Transverse colon (tissue), 4 donors: ENCODE measurements at regions of chr18 and their contacts with region 1.

Region 1: DNA sequence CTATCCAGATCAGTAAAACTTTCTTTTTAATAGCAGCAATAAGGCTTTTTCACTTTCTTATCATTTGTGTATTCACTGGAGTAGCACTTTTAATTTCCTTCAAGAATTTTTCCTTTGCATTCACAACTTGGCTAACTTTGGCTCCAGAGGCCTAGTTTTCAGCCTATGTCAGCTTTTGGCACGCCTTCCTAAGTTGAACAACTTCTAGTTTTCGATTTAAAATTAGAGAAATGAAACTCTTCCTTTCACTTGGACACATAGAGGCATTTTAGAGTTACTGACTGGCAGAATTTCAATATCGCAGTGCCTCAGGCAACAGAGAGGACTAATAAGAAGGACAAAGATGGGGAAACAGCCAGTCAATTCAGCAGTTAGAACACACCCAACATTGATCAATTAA is 577.4 kb downstream of the DSC3 start:
- DNase-seq: no peak
- H3K4me3 ChIP-seq: no peak overlapping the region
- H3K27ac ChIP-seq: no peak overlapping the region
- H3K4me1 ChIP-seq: no peaks in the 10 kb centered on the region
- H3K27me3 ChIP-seq: no peaks in the 10 kb centered on the region
- CTCF ChIP-seq: no peak
- EP300 ChIP-seq: no peak
- POLR2A ChIP-seq: no peak

Region 2: DNA sequence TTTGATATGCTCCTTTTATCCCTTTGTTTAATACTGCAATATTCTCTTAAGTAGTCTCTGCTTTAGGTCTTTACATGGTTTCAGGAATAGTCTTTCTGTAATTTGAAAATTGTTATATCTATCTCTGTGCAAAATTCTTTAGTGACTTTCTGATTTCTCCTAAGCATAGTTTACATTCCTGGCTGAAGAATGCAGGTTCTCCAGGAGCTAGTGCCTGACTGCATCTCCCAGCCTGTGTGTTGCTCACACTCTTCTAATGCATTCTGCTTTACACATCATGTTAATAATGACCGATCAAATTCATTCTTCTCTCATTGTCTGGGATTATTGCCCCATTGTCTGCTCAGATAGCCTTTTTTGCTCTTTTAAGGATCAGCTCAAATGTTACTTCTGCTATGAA is 771.8 kb before region 1 on chr18:
- in situ Hi-C with region 1: no loop called
- intact Hi-C with region 1: no loop called
- DNase-seq: no peak
- H3K4me3 ChIP-seq: no peak overlapping the region
- H3K27ac ChIP-seq: no peak overlapping the region
- H3K4me1 ChIP-seq: no peaks in the 10 kb centered on the region
- H3K27me3 ChIP-seq: no peaks in the 10 kb centered on the region
- CTCF ChIP-seq: no peak
- EP300 ChIP-seq: no peak
- POLR2A ChIP-seq: no peak

Region 3: DNA sequence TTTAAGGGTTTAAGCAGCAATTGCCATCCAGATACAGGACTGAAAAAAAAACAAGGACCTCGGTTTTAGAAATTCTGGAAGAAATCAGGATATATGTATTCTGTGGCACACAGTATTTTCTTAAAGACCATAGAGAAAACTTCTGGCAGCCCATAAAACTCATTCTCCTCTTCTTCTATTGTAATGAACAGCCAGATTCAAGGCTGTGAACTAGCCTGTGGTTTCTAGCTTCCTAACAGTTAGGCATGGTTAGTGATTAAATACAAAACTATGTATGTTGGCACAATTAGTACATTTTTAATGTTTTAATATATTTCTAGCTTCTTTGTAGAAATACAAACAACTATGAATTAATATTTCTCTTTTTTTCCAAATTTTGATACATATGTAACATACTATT is 21.8 kb after region 1 on chr18:
- in situ Hi-C with region 1: no loop called
- intact Hi-C with region 1: loop called (anchors 2 kb)
- DNase-seq: no peak
- H3K4me3 ChIP-seq: no peak overlapping the region
- H3K27ac ChIP-seq: no peak overlapping the region
- H3K4me1 ChIP-seq: no peaks in the 10 kb centered on the region
- H3K27me3 ChIP-seq: no peaks in the 10 kb centered on the region
- CTCF ChIP-seq: no peak
- EP300 ChIP-seq: no peak
- POLR2A ChIP-seq: no peak